ENCODE measurements at regions of chr22 and their contacts with region 1.

Region 1: DNA sequence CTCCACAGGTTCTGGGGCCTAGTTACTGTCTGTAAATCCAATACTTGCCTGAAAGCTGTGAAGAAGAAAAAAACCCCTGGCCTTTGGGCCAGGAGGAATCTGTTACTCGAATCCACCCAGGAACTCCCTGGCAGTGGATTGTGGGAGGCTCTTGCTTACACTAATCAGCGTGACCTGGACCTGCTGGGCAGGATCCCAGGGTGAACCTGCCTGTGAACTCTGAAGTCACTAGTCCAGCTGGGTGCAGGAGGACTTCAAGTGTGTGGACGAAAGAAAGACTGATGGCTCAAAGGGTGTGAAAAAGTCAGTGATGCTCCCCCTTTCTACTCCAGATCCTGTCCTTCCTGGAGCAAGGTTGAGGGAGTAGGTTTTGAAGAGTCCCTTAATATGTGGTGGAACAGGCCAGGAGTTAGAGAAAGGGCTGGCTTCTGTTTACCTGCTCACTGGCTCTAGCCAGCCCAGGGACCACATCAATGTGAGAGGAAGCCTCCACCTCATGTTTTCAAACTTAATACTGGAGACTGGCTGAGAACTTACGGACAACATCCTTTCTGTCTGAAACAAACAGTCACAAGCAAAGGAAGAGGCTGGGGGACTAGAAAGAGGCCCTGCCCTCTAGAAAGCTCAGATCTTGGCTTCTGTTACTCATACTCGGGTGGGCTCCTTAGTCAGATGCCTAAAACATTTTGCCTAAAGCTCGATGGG is 13.5 kb downstream of the PIK3IP1 start:
- DNase-seq: no peak
- ATAC-seq: no peak
- H3K4me3 ChIP-seq: no peak overlapping the region
- H3K27ac ChIP-seq: no peak overlapping the region
- H3K4me1 ChIP-seq: no peaks in the 10 kb centered on the region
- H3K27me3 ChIP-seq: no peaks in the 10 kb centered on the region

Region 2: GRCh38 chr22:31333641-31334040 is 54.9 kb after region 1 on chr22:
- intact Hi-C with region 1: loop called in 1 of 2 experiments (anchors 2 kb)
- DNase-seq: peak in 1 of 2 donors; percentile 3
- ATAC-seq: no peak
- H3K4me3 ChIP-seq: no peak overlapping the region
- H3K27ac ChIP-seq: peak overlapping the region in 1 of 2 donors; percentile 10
- H3K4me1 ChIP-seq: no peaks in the 10 kb centered on the region
- H3K27me3 ChIP-seq: no peaks in the 10 kb centered on the region

Measured in aorta (tissue), 5 donors.